ENCODE measurements at regions of chr1 and their contacts with region 1.

Region 1: DNA sequence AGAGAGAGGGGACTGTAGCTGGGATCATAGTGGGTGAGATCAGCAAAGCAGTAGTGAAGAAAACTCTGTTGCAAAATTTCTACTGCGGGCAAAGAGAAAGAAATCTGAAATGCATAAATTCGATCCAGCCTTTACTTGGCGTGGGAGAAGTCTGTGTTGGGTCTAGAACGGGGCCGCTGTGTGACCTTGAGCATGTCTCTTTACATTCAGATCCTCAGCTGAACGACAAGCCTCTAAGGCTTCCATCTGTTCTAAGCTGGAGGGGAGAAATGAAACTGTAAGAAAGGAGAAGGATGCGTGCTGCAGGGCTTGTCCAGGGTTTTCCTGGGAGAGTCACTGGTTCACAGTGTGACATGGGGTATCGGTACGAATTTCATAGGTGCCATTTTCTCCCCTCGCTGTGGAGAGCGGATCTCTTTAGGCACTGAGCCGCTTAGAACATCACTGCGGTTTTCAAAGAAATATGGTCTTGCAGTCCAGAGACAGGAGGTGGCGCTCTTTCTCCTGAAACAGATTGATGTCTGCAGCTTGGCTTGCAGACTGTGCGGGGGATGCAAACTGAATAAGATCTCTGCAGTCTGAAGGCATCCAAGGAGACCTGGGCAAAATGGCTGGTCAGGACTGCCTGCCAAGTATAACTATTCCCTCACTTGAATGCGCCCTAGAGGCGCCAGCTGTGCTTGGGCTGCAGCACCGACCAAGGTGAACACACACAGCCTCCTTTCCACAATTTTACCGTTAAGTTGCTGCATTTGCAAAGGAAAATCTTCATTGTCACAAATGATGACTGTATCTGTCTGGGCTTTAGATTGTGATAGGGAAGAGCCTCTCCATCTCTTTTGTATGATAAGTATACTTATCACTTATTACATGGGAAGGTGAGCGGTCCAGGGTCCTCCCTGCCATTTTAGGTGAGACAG is 104.1 kb downstream of the XCL2 start:
- DNase-seq: peak; percentile 51
- H3K4me3 ChIP-seq: peak overlapping the region; percentile 47
- H3K27ac ChIP-seq: peak overlapping the region; percentile 6
- H3K4me1 ChIP-seq: peaks cover 6% of the 10 kb centered on the region
- H3K27me3 ChIP-seq: no peaks in the 10 kb centered on the region
- CTCF ChIP-seq: peak; percentile 77

Region 2: GRCh38 chr1:168572633-168573032 is 132.9 kb after region 1 on chr1:
- intact Hi-C with region 1: loop called (anchors 10 kb)
- DNase-seq: no peak
- H3K4me3 ChIP-seq: no peak overlapping the region
- H3K27ac ChIP-seq: no peak overlapping the region
- H3K4me1 ChIP-seq: no peaks in the 10 kb centered on the region
- H3K27me3 ChIP-seq: no peaks in the 10 kb centered on the region
- CTCF ChIP-seq: no peak